ENCODE measurements at regions of chr16 and their contacts with region 1.

Region 1: DNA sequence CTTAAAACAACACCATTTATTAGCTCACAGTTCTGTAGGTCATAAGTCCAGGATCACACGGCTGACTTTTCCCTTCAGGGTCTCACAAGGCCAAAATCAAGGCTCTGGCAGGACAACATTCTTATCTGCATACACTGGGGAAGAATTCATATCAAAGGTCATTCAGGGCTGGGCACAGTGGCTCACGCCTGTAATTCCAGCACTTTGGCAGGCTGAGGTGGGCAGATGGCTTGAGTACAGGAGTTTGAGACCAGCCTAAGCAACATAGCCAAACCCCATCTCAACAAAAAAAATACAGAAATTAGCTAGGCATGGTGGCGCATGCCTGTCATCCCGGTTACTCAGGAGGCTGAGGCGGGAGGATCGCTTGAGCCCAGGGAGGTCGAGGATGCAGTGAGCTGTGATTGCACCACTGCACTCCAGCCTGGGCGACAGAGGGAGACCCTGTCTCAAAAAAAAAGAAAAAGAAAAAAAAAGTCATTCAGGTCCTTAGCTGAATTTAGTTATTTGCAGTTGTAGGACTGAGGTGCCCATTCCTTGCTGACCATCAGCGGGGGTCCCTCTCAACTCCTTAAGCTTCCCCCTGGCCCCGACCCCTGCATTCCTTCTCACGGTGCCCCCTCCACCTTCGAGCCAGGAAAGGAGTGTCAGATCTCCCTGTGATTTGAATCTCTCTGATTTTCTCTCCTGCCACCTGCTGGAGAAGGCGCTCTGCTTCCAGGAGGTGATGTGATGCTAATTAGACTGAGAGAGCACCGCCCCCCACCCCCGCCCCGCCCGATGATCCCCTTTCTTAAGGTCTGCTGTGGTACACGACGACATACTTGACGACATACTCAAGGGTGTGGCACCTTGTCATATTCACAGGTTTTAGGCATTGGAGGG is 91.8 kb upstream of the CLEC18A start:
- DNase-seq: peak in 1 of 2 donors; percentile 23
- ATAC-seq: peak in 1 of 2 donors; percentile 20
- H3K4me3 ChIP-seq: no peak overlapping the region
- H3K27ac ChIP-seq: peak overlapping the region; percentile 80 to 84 (median 82)
- H3K4me1 ChIP-seq: peaks cover 22 to 32% of the 10 kb centered on the region in 2 donors
- H3K27me3 ChIP-seq: no peaks in the 10 kb centered on the region
- CTCF ChIP-seq: peak in 4 of 5 experiments; percentile 20 to 57 (median 41)
- POLR2A ChIP-seq: no peak

Region 2: GRCh38 chr16:69924777-69925191 is 65.4 kb after region 1 on chr16:
- in situ Hi-C with region 1: no loop called
- intact Hi-C with region 1: loop called (anchors 10 kb)
- DNase-seq: peak in 1 of 2 donors; percentile 58
- ATAC-seq: peak in 1 of 2 donors; percentile 65
- H3K4me3 ChIP-seq: peak overlapping the region; percentile 23 to 41 (median 34)
- H3K27ac ChIP-seq: peak overlapping the region; percentile 70 to 82 (median 72)
- H3K4me1 ChIP-seq: peaks cover 15 to 27% of the 10 kb centered on the region in 2 donors
- H3K27me3 ChIP-seq: no peaks in the 10 kb centered on the region
- CTCF ChIP-seq: no peak
- POLR2A ChIP-seq: peak in 1 of 2 donors; percentile 47

Region 3: GRCh38 chr16:70380302-70380860 is 521.0 kb after region 1 on chr16:
- in situ Hi-C with region 1: no loop called
- intact Hi-C with region 1: no loop called
- DNase-seq: peak; percentile 18 to 48
- ATAC-seq: peak; percentile 11 to 28
- H3K4me3 ChIP-seq: peak overlapping the region; percentile 58 to 76 (median 69)
- H3K27ac ChIP-seq: peak overlapping the region; percentile 82 to 96 (median 93)
- H3K4me1 ChIP-seq: peaks cover 8 to 13% of the 10 kb centered on the region in 2 donors
- H3K27me3 ChIP-seq: no peaks in the 10 kb centered on the region
- CTCF ChIP-seq: no peak
- POLR2A ChIP-seq: no peak

Measured in gastrocnemius medialis (tissue), 4 donors.